ENCODE measurements at regions of chr20 and their contacts with region 1.

Region 1: GRCh38 chr20:36273414-36274180 is 32.5 kb upstream of the DLGAP4 start:
- DNase-seq: no peak
- ATAC-seq: no peak
- H3K4me3 ChIP-seq: no peak overlapping the region
- H3K4me3 Mint-ChIP-seq: no peak overlapping the region
- H3K27ac ChIP-seq: no peak overlapping the region
- H3K27ac Mint-ChIP-seq: no peak overlapping the region
- H3K4me1 ChIP-seq: no peaks in the 10 kb centered on the region
- H3K4me1 Mint-ChIP-seq: peaks cover 0 to 1% (median 0%) of the 10 kb centered on the region in 7 donors
- H3K27me3 ChIP-seq: no peaks in the 10 kb centered on the region
- H3K27me3 Mint-ChIP-seq: peaks cover 0 to 13% (median 3%) of the 10 kb centered on the region in 5 donors

Region 2: DNA sequence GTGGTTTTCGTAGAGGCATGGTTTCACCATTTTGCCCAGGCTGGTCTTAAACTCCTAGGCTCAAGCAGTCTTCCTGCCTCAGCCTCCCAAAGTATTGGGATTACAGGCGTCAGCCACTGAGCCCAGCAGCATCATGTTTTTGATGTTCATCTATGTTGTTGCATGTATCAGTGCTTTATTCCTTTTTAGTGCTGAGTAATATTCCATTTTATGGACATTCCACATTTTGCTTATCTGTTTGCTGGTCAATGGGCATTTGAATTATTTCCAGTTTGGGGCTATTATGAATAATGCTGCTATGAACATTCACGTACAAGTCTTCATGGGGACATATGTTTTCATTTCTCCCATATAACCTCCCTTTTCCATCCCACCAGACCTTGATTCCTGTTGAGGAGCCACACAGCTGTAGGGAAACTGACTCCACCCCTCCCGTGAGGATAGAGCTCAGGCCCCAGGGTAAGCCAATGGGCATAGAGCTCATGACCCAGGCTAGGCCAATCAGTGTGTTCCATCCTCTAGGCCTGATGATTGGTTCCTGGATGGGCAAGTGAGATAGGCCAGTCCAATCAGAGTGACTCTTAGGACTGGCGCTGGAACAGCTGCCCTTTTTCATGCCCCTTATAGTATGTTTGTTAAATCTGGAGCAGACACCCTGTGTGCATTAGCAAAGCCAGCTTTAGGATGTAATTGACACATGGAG is 82.0 kb after region 1 on chr20:
- CTCF ChIA-PET with region 1: no interaction called
- POLR2A ChIA-PET with region 1: no interaction called
- intact Hi-C with region 1: no loop called
- DNase-seq: no peak
- ATAC-seq: no peak
- H3K4me3 ChIP-seq: no peak overlapping the region
- H3K4me3 Mint-ChIP-seq: no peak overlapping the region
- H3K27ac ChIP-seq: no peak overlapping the region
- H3K27ac Mint-ChIP-seq: no peak overlapping the region
- H3K4me1 ChIP-seq: no peaks in the 10 kb centered on the region
- H3K4me1 Mint-ChIP-seq: peaks cover 0 to 3% (median 0%) of the 10 kb centered on the region in 7 donors
- H3K27me3 ChIP-seq: no peaks in the 10 kb centered on the region
- H3K27me3 Mint-ChIP-seq: peaks cover 0 to 25% (median 5%) of the 10 kb centered on the region in 5 donors

Region 3: DNA sequence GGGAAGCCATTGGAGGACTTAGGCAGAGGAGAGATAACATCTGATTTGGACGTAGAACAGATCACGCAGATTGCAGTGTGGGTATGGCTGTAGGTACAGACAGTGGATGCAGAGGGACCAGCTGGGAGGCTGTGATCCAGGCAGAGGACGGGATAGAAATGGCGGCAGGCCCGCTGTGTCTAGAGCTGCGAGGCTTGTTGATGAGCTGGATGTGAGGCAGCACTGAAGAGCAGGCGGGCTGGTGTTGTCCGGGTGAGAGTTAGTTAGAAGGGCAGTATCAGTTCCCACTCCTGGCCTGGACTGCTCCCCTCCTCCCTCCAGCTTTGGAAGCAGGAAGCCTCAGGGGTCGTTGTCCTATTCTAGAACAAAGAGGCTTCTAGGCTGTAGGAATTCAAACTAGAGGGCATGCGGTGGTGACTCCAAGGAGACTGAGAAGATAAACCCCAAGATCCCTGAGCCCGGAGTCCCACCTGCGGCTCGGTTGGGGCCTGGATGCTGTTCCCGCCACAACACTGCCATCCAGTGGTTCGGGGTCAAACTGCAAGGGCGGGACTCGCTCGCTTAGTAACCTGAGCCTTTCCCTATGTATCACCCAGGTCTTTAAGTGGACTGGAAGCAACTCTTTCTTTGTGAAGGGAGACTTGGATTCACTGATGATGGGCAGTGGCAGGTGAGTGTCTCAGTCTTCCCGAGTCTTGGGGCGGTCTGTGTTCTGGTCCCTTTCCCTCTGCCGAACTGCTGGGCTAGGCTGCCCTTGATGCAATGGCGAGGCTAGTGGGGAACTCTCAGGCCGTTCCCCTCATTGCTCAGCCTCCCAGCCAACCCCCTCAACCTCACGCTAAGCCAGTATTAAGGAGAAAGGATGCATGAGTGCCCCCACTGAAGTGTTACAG is 613.5 kb after region 1 on chr20:
- CTCF ChIA-PET with region 1: no interaction called
- POLR2A ChIA-PET with region 1: no interaction called
- intact Hi-C with region 1: loop called in 1 of 2 experiments (anchors 5 kb)
- DNase-seq: peak; percentile 59 to 84 (median 75)
- ATAC-seq: peak; percentile 94
- H3K4me3 ChIP-seq: no peak overlapping the region
- H3K4me3 Mint-ChIP-seq: peak overlapping the region in 7 of 10 donors; percentile 10 to 62 (median 36)
- H3K27ac ChIP-seq: peak overlapping the region; percentile 33
- H3K27ac Mint-ChIP-seq: peak overlapping the region; percentile 2 to 89 (median 73)
- H3K4me1 ChIP-seq: peaks cover 5 to 7% of the 10 kb centered on the region in 2 donors
- H3K4me1 Mint-ChIP-seq: peaks cover 4 to 22% (median 16%) of the 10 kb centered on the region in 7 donors
- H3K27me3 ChIP-seq: no peaks in the 10 kb centered on the region
- H3K27me3 Mint-ChIP-seq: no peaks in the 10 kb centered on the region